Psoas muscle (tissue), 8 donors: ENCODE measurements at regions of chr5 and their contacts with region 1.

Region 1: DNA sequence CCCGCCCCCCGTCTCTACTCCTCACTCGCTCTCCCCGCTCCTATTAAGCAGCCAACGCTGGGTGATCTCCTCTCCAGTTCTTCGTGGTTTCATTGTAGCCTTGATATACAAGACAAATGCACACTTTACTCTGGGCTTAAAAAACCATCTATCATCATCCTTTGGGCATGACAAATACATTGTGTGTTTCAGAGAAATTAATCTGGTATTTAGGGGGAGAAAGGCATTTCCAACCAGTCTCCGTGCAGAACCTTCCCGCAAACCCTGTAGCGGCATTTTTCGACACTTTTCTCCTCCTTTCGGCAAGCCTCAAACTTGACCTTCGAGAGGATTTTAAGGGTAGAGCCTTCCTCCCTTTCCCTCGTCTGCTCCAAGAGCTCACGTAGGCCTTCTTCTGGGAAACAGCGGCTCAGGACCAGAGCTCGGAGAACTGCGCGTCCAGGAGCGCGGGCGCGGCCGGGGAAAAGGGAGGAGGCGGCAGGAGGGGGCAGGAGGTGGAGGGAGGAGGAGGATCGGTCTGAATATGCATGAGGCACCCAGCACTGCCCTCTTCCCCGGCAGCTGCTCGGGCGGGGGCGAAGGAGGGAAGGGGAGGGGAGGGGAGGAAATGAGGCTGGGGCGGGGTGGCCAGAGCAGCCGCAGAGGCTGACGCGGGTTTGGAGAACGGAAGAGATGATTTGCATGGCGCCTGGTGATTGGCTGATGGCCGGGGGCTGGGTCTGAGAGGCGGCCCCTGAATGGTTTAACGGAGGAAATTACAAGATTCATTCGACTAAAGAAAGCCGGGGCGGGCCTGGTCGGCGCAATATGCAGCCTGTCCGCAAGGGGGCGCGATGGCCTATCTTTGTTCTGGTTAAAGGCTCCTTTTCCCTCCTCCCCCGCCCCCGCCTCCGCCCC is 127.5 kb downstream of the TMEM161B start:
- DNase-seq: peak; percentile 96 to 97
- ATAC-seq: peak; percentile 95 to 98 (median 98)
- H3K4me3 ChIP-seq: peak overlapping the region; percentile 70
- H3K27ac ChIP-seq: no peak overlapping the region
- H3K4me1 ChIP-seq: peaks cover 8% of the 10 kb centered on the region
- H3K27me3 ChIP-seq: peaks cover 14 to 75% (median 14%) of the 10 kb centered on the region in 3 donors
- CTCF ChIP-seq: peak; percentile 61

Region 2: GRCh38 chr5:87780831-87781760 is 360.0 kb before region 1 on chr5:
- intact Hi-C with region 1: loop called in 1 of 2 experiments (anchors 10 kb)
- DNase-seq: peak; percentile 62 to 87
- ATAC-seq: peak; percentile 87 to 99 (median 93)
- H3K4me3 ChIP-seq: no peak overlapping the region
- H3K27ac ChIP-seq: no peak overlapping the region
- H3K4me1 ChIP-seq: no peaks in the 10 kb centered on the region
- H3K27me3 ChIP-seq: peaks cover 0 to 12% (median 0%) of the 10 kb centered on the region in 3 donors
- CTCF ChIP-seq: peak; percentile 94

Region 3: GRCh38 chr5:88268385-88269184 is 127.5 kb after region 1 on chr5 and contains the start of gene TMEM161B:
- intact Hi-C with region 1: loop called in 1 of 2 experiments (anchors 10 kb)
- DNase-seq: peak; percentile 90 to 93
- ATAC-seq: peak; percentile 98 to 100 (median 100)
- H3K4me3 ChIP-seq: peak within 1 kb of the TSS; percentile 74
- H3K27ac ChIP-seq: peak within 1 kb of the TSS; percentile 73
- H3K4me1 ChIP-seq: peaks cover 31% of the 10 kb centered on the region
- H3K27me3 ChIP-seq: no peaks in the 10 kb centered on the region
- CTCF ChIP-seq: no peak
- total RNA-seq, gene TMEM161B: 5.1 to 10.2 (median 7.5) TPM

Region 4: DNA sequence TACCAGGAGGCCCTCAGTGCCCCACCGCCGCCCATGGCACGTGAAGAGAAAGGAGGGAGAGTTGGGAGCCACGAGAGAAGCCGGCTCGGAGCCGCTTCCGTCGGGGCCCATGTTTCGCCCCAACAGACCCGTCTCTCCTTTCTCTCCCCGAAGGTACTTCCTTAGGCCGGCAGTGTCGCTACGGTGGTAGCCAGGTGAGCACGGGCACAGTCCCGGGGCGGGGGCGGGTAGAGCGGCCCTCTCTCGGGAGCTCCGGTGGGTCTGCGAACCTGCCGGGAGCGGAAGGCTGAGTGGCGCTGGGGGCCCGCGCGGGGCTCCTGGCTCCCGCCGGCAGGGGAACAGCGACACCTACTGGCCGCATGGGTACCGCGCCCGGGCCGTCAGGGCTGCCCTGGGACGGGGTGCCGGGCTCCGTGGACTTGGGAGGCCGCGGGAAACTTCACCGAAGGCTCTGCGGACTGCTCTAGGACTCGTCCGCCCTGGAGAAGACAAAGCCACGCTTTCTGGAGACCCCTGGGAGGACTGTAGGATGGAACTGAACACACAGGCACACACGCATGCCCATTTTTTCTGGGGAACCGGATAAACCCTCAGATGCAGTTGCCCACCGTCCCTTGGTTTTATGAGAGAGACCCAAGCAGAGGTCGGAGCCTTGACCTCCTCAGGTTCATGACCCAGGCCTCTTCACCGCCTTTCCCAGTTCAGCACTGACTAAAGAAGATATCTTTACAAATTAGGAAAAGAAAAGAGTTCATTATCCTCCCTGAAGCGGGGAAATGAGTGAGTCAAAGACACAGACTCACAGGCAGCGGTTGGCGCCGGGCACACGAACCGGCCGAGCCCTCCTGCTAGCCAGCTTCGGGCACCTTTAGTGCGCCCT is 539.4 kb after region 1 on chr5:
- intact Hi-C with region 1: loop called (anchors 2 to 10 kb)
- DNase-seq: peak; percentile 71 to 80
- ATAC-seq: peak; percentile 86 to 91 (median 88)
- H3K4me3 ChIP-seq: peak overlapping the region; percentile 48
- H3K27ac ChIP-seq: no peak overlapping the region
- H3K4me1 ChIP-seq: peaks cover 11% of the 10 kb centered on the region
- H3K27me3 ChIP-seq: peaks cover 6 to 100% (median 47%) of the 10 kb centered on the region in 3 donors
- CTCF ChIP-seq: peak; percentile 95